Uterus (tissue), 4 donors: ENCODE measurements at regions of chr2 and their contacts with region 1.

Region 1: DNA sequence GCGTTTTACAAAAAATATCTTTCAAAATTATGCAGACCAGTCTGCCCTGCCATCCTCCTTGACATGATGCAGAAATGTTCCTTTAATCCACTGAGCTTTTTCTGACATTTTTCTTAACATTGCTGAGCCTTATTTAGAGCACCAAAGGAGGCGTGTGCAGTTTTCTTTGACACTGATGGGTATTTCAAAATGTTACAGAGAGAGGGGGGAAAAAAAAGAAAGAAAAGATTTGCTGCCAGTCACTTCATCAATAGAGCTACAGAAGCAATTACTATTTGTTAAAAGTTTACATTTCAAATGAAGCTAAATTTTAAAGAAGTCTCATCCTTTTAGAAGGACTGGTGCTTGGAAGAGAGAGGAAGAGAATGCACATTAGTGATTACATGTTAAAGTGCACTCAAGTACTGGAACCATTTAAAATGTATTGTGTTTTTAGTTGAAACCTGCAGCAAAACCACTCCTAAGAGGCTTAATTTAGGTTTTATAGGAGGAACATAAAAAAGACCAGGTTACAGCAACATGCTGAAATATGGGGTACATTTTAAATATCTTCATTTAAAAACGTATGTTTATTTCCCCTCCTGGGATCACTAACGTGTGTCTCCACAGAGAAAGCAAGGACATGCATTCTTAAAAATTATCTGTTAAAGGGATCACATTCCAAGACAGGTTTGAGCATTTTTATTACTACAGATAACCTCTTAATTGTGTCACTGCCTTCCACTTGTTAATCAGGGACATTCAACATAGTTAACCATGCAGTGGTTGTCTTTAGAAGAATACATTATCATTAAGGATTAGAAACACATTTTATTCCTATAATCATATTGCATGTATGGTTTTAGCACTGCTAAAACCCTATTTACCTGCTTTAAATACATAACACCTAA is 258.4 kb downstream of the MEIS1 start:
- DNase-seq: no peak
- H3K4me3 ChIP-seq: peak overlapping the region; percentile 28 to 42
- H3K27ac ChIP-seq: peak overlapping the region; percentile 87 to 97
- H3K4me1 ChIP-seq: no peaks in the 10 kb centered on the region
- H3K27me3 ChIP-seq: no peaks in the 10 kb centered on the region
- CTCF ChIP-seq: no peak
- POLR2A ChIP-seq: no peak

Region 2: DNA sequence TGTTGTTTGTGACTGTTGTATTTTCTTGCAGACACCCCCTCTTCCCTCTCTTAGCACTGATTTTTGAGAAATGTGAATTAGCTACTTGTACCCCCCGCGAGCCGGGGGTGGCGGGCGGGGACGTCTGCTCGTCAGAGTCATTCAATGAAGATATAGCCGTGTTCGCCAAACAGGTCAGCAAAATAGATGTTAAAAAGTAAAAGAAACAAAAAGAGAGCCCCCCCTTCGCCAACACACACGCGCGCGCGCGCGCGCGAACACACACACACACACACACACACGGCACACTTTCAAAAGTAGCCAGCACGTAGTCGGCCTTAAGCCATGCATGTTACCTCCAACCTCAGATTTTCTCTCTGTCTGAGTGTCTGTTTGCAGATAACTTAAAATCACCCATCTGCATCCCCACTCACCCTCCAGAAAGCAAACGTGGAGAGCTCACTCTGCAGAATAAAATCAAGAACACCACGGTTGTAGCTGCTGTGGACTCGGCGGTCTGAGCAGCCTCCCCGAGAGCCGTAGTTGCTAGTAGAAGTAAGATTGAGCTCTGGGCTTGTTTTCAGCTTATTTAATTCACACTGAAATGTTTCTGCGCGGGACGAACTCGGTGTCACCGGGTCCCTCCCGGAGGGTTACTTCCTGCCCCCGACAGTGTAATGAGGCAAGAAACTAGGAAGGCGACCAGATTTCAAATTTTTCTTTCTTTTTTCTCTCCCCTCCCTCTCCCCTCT is 253.3 kb before region 1 on chr2:
- intact Hi-C with region 1: loop called (anchors 2 kb)
- DNase-seq: no peak
- H3K4me3 ChIP-seq: peak overlapping the region; percentile 80 to 97
- H3K27ac ChIP-seq: peak overlapping the region; percentile 96 to 100
- H3K4me1 ChIP-seq: no peaks in the 10 kb centered on the region
- H3K27me3 ChIP-seq: no peaks in the 10 kb centered on the region
- CTCF ChIP-seq: no peak
- POLR2A ChIP-seq: no peak